Activated T-helper 2 cell treated with anti-CD3 and anti-CD28 coated beads, Interferon-gamma antibody, Interleukin-2, Interleukin-4, amounts not matched to agents 10 μg/mL and 5 μg/mL and 100 μg/mL, durations not matched to agents 14 hours and 24 hours and 36 hours (primary cell): ENCODE measurements at regions of chr7 and their contacts with region 1.

Region 1: DNA sequence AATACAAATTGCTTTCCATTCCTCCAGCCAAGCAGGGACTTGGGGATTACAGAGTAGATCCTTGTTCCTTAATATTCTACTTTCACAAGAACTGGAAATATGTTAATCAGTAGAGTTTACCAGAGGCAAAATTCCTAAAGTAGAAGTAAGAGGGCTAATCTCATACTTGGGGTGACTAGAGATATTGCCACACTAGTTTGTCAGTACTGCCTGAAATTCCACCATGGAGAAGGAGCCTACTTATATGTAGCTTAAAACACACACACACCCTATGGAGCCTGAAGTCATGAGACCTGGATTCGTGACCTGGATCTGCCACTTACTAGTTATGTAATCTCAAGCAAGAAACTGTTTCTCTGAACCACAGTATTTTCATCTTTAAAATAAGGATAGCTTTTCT is 33.9 kb downstream of the STRIP2 start:
- DNase-seq: no peak
- H3K4me3 Mint-ChIP-seq: no peak overlapping the region
- H3K27ac Mint-ChIP-seq: no peak overlapping the region
- H3K4me1 Mint-ChIP-seq: peaks cover 9% of the 10 kb centered on the region
- H3K27me3 Mint-ChIP-seq: no peaks in the 10 kb centered on the region

Region 2: GRCh38 chr7:129343099-129343700 is 124.9 kb before region 1 on chr7:
- intact Hi-C with region 1: loop called (anchors 1 kb)
- DNase-seq: no peak
- H3K4me3 Mint-ChIP-seq: no peak overlapping the region
- H3K27ac Mint-ChIP-seq: peak overlapping the region; percentile 59
- H3K4me1 Mint-ChIP-seq: peaks cover 38% of the 10 kb centered on the region
- H3K27me3 Mint-ChIP-seq: peaks cover 2% of the 10 kb centered on the region

Region 3: GRCh38 chr7:129367700-129368388 is 100.2 kb before region 1 on chr7:
- intact Hi-C with region 1: loop called (anchors 1 kb)
- DNase-seq: peak; percentile 63
- H3K4me3 Mint-ChIP-seq: peak overlapping the region; percentile 68
- H3K27ac Mint-ChIP-seq: peak overlapping the region; percentile 86
- H3K4me1 Mint-ChIP-seq: peaks cover 31% of the 10 kb centered on the region
- H3K27me3 Mint-ChIP-seq: no peaks in the 10 kb centered on the region

Region 4: GRCh38 chr7:129401967-129402860 is 65.9 kb before region 1 on chr7:
- intact Hi-C with region 1: loop called (anchors 1 kb)
- DNase-seq: no peak
- H3K4me3 Mint-ChIP-seq: no peak overlapping the region
- H3K27ac Mint-ChIP-seq: peak overlapping the region; percentile 13
- H3K4me1 Mint-ChIP-seq: peaks cover 26% of the 10 kb centered on the region
- H3K27me3 Mint-ChIP-seq: no peaks in the 10 kb centered on the region

Region 5: DNA sequence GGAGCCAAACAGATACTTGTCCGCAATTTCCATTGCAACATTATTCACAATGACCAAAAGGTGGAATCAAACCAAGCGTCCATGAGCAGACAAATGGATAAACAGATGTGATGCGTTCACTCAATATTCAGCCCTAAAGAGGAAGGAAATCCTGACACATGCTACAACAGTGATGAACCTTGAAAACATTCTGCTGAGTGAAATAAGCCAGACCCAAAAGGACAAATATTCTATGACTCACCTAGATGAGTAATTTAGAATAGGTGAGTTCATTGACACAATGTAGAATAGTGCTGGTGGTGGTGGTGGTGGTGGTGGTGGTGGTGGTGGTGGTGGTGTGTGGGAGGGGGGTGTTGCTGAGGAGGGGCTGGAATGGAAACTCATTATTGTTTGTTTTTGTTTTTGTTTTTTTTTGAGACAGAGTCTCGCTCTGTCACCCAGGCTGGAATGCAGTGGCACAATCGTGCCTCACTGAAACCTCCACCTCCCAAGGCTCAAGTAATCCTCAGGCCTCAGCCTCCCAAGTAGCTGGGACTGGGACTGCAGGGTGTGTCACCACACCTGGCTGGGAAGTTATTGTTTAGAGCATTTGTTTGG is 62.8 kb after region 1 on chr7:
- intact Hi-C with region 1: loop called (anchors 2 kb)
- DNase-seq: no peak
- H3K4me3 Mint-ChIP-seq: no peak overlapping the region
- H3K27ac Mint-ChIP-seq: peak overlapping the region; percentile 59
- H3K4me1 Mint-ChIP-seq: peaks cover 13% of the 10 kb centered on the region
- H3K27me3 Mint-ChIP-seq: no peaks in the 10 kb centered on the region